Right ventricle myocardium inferior (tissue), 1 donor: ENCODE measurements at regions of chr1 and their contacts with region 1.

Region 1: DNA sequence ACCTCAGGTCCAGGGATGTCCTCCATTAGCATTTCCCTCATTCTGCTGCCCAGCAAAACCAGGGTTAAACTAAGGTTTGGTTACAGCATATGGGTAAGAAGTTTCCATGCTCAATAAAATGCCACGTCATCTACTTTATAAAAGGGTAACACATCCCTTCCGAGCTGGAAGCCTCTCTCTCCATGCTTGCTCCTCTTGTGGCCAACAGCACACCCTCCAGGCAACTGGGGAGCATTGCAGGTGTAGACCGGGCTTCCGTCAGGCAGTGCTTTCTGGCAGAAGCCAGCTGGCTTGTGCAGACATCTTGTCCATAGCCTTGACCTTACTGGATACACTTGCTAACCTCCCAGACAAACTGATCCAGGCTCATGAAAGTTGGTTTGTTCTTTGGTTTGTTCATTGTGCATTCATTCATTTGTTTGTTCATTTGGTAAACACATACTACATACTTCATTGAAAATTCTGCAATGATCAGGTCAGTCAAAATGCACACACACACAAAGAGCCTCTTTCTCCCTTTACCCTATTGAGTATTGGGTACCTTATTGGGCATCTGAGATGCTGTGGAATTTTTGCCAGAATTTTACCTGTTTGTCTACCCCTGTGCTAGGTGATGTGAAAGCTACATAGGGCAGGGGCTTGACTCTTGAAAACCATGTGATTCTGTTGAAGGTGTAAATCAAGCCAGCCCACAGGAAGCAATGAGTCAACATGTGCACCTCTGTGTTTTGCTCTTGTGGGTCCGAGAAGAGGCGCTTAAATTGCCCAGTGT is 422.8 kb downstream of the CAMTA1 start:
- DNase-seq: no peak
- ATAC-seq: peak; percentile 72

Region 2: GRCh38 chr1:6794164-6794563 is 413.9 kb before region 1 on chr1:
- intact Hi-C with region 1: loop called (anchors 5 kb)
- DNase-seq: no peak
- ATAC-seq: no peak

Region 3: GRCh38 chr1:6998267-6998666 is 209.8 kb before region 1 on chr1:
- intact Hi-C with region 1: loop called (anchors 5 kb)
- DNase-seq: no peak
- ATAC-seq: peak; percentile 90

Region 4: DNA sequence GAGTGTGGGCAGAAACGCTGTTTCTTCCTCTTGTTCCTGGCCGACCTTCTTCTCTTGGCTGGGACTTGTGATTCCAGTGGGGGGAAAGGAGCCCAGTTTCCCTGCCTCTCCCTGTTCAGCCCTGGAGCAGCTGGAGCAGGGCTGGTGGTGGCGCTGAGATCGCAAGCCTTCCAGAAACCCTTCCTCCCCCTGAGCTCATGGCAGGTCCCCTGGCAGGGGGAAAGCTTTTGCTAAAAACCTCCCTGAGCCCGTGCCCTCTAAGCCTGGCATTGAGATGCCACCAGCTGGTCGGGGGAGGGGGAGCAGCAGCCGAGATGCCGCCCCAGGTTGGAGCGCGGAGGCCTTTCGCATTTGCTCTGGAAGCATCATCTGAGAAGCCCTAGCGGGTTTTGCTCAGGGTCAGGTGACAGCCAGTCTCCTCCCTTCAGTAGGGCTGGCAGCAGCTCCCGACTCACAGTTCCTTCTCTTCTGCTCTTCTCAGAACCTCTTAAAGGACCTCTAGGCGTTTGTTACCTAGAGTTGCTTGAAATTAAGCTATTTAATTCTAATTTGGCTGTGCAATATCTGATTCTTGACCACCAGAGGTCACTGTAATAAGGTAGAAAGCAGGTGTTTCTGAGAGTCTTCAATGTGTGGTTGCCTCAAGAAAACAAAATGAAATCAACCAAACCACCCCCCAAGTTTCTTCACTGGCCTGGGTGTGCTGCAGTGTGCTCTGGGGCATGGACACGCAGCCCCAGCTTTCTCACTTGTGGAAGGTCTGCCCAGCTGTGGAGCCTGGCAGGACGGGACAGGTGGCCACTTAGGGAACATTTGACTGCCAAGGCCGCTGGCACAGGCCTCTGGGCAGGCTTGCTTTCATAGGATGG is 165.5 kb before region 1 on chr1:
- intact Hi-C with region 1: loop called (anchors 5 kb)
- DNase-seq: no peak
- ATAC-seq: no peak

Region 5: GRCh38 chr1:7070389-7071029 is 137.6 kb before region 1 on chr1:
- intact Hi-C with region 1: loop called (anchors 10 kb)
- DNase-seq: no peak
- ATAC-seq: peak; percentile 73